Heart left ventricle (tissue), 16 donors: ENCODE measurements at regions of chr6 and their contacts with region 1.

Region 1: GRCh38 chr6:108113557-108114519 is 39.3 kb upstream of the OSTM1 start:
- DNase-seq: peak in 2 of 5 donors; percentile 21 to 67
- ATAC-seq: peak; percentile 19 to 48 (median 30)
- H3K4me3 ChIP-seq: peak overlapping the region in 9 of 12 donors; percentile 7 to 57 (median 20)
- H3K27ac ChIP-seq: no peak overlapping the region
- H3K4me1 ChIP-seq: peaks cover 0 to 47% (median 34%) of the 10 kb centered on the region in 12 donors
- H3K27me3 ChIP-seq: peaks cover 28 to 93% (median 61%) of the 10 kb centered on the region in 9 donors
- CTCF ChIP-seq: peak in 11 of 12 donors; percentile 24 to 63 (median 46)
- POLR2A ChIP-seq: no peak

Region 2: DNA sequence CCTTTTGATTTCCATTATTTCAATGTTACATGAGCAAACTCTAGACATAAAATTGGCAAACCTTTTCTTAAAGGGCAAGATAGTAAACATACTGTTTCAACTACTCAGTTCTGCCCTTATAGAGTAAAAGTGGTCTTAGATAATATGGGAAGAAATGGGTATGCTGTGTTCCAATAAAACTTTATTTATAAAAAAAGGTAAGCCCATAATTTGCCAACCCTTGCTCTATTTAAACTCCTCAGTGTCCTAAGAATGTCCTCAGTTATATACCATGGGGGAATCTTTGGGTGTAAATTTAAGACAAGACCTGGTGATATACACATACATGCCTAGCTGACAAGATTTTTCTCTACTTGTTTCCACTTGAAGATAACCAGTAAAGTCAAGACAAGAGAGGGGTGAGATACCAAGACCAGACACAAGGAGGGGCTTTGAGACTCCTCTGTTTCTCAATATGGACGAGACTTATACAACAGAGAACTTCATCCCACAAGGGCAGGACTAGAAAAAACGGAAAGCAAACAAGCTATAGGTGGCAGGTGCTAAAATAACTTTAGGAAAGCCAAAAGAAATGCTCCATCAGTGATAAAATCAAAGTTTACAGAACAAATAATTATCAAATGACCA is 136.5 kb after region 1 on chr6:
- intact Hi-C with region 1: loop called in 1 of 10 experiments (anchors 10 kb)
- DNase-seq: no peak
- ATAC-seq: no peak
- H3K4me3 ChIP-seq: no peak overlapping the region
- H3K27ac ChIP-seq: no peak overlapping the region
- H3K4me1 ChIP-seq: peaks cover 0 to 66% (median 32%) of the 10 kb centered on the region in 12 donors
- H3K27me3 ChIP-seq: no peaks in the 10 kb centered on the region
- CTCF ChIP-seq: no peak
- POLR2A ChIP-seq: no peak